Activated T-helper 1 cell treated with anti-CD3 and anti-CD28 coated beads, Interleukin-12 subunit alpha, Interleukin-12 subunit beta, Interleukin-2, Interleukin-4 antibody, amounts not matched to agents 30 ng/mL and 10 ng/mL and 1 ng/mL, durations not matched to agents 14 hours and 24 hours and 36 hours (primary cell): ENCODE measurements at regions of chr1 and their contacts with region 1.

Region 1: GRCh38 chr1:226687426-226687825 is 51.7 kb downstream of the ITPKB start:
- DNase-seq: no peak
- H3K4me3 Mint-ChIP-seq: peak overlapping the region; percentile 29
- H3K27ac Mint-ChIP-seq: peak overlapping the region; percentile 83
- H3K4me1 Mint-ChIP-seq: peaks cover 97% of the 10 kb centered on the region
- H3K27me3 Mint-ChIP-seq: no peaks in the 10 kb centered on the region

Region 2: DNA sequence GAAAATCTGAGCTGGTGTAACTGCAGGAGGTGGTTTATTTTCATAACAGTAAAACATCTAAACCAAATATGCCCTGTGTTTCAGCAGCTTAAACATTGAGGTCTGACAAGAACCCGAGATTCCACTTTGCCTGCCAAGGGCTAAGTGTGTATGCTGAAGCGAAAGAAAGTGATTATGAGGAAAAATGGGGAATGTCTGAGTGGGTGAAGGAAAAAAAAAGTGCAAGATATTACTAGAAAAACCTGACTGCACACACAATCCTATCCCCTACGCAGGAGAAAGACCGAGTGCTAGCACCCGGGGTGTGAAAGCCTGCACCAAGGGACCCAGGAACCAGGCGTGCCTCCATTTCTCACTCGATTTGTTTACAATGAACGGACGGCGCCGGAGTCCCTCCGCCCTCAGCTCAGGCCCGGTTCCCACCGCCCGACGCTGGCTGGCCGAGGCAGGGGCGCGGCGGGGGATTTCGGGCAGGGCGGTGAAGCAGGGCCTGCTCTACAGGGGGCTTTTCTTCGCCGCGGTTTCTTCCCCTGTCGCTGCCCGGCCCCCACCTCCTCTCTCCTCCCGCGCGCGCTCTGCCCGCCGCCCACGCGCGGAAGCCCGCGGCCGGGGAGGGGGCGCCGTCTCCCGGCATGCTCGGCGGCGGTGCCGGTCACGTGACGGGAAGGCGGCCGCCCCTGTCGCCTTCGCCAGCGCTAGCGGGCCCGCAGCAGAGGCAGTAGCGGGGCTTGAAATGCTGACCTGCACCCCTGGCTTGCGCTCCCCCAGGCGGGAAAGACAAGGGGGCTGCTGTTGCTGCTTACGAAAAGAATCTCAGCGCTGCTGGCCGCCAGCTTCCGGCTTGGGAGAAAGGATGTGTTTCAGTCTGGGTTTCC is 15.8 kb after region 1 on chr1:
- intact Hi-C with region 1: loop called (anchors 1 kb)
- DNase-seq: peak; percentile 81
- H3K4me3 Mint-ChIP-seq: peak overlapping the region; percentile 77
- H3K27ac Mint-ChIP-seq: peak overlapping the region; percentile 89
- H3K4me1 Mint-ChIP-seq: peaks cover 57% of the 10 kb centered on the region
- H3K27me3 Mint-ChIP-seq: no peaks in the 10 kb centered on the region